ENCODE measurements at regions of chr1 and their contacts with region 1.

Region 1: DNA sequence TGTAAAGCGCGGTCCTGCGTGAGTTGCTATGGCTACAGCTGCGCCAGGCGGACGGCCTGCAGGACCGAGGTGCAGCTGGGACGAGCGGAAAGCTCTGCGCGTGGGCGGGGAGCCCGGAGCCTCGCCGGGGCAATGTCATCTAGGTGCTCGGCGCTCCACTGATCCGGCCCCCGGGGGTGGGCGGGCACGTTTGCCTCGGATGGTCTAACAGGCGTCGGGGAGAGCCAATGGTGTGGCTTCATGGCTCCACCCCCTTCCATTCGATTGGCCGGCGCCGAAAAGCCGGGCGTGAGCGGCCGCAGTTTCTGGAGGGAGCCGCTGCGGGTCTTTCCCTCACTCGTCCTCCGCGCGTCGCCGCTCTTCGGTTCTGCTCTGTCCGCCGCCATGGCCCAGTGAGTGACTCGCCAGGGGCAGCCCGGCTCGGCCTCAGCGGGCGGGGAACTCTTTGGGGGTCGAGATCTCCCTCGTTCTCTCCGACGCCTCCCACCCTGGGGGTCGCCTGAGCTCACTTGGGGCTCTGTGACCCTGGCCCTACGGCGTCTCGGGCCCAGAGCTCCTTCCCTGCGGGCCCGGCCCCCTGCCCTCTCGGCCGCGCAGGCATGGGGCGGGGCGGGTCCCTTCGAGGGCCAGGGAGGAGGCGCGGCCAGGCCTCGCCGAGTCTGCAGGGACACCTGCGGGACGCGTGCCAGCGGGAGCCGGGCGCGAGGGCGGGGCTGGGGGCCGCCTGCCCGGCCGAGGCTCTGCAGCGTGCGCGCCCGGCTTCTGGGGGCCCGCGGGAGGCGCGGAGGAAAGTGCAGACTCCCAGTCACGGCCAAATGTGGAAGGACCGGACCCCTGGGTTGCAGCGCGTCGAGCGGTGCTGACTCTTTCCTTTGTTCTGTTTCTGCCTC is at the start of gene PGD:
- DNase-seq: peak; percentile 95
- ATAC-seq: peak; percentile 94
- H3K4me3 ChIP-seq: peak within 1 kb of the TSS; percentile 66 to 80 (median 80)
- H3K27ac ChIP-seq: peak within 1 kb of the TSS; percentile 97
- H3K4me1 ChIP-seq: peaks cover 33% of the 10 kb centered on the region
- H3K27me3 ChIP-seq: no peaks in the 10 kb centered on the region
- CTCF ChIP-seq: peak; percentile 30; the same call in 1 of the 2 replicates
- EP300 ChIP-seq: peak in 1 of 2 experiments; percentile 46; a peak in 1 of 4 replicates
- POLR2A ChIP-seq: peak; percentile 90 to 97
- RAD21 ChIP-seq: no peak; the same call in 1 of the 2 replicates
- total RNA-seq, gene PGD: 210 and 242 TPM in 2 replicates

Region 2: GRCh38 chr1:9960706-9961562 is 438.0 kb before region 1 on chr1:
- CTCF ChIA-PET with region 1: no interaction called
- POLR2A ChIA-PET with region 1: no interaction called
- in situ Hi-C with region 1: no loop called
- intact Hi-C with region 1: no loop called
- DNase-seq: no peak
- ATAC-seq: no peak
- H3K4me3 ChIP-seq: no peak overlapping the region
- H3K27ac ChIP-seq: no peak overlapping the region
- H3K4me1 ChIP-seq: peaks cover 7% of the 10 kb centered on the region; the same call in 1 of the 2 replicates
- H3K27me3 ChIP-seq: no peaks in the 10 kb centered on the region
- CTCF ChIP-seq: no peak
- EP300 ChIP-seq: no peak
- POLR2A ChIP-seq: no peak
- RAD21 ChIP-seq: no peak

Region 3: DNA sequence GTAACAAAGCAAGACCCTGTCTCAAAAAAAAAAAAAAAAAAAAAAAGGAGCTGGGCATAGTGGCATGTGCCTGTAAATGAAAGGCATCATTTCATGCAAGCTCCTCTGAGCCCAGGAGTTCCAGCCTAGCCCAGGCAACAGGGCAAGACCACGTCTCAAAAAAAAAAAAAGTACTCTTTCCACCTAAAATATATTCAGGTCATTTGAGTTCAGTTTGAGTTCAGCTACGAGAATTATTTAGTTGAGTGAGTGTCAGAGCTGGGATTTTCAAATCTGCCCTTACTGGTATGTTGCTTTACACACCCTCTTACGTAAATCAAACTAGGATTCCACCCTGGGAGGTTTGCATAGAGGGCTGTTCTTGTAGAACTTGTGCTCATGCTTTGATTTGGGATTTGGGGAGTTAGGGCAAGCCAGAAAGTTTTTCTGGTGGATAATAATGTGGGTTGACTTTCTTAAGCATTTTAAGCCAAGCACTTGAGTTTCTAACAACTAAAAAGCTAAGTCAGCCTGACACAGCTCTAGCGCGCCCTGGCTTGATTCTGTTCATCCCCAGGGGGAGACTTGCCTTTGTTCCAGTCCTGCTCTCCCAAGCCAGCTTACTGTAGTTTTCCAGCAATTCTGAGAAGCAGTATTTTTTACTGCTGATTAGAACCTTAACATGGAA is 11.4 kb before region 1 on chr1:
- CTCF ChIA-PET with region 1: interaction called, 3 read pairs
- POLR2A ChIA-PET with region 1: interaction called, 65 read pairs
- in situ Hi-C with region 1: no loop called
- intact Hi-C with region 1: no loop called
- DNase-seq: no peak
- ATAC-seq: peak; percentile 46
- H3K4me3 ChIP-seq: no peak overlapping the region; a peak in 1 of 6 replicates
- H3K27ac ChIP-seq: peak overlapping the region; percentile 74
- H3K4me1 ChIP-seq: peaks cover 51% of the 10 kb centered on the region
- H3K27me3 ChIP-seq: no peaks in the 10 kb centered on the region
- CTCF ChIP-seq: no peak
- EP300 ChIP-seq: no peak
- POLR2A ChIP-seq: no peak
- RAD21 ChIP-seq: no peak

Region 4: DNA sequence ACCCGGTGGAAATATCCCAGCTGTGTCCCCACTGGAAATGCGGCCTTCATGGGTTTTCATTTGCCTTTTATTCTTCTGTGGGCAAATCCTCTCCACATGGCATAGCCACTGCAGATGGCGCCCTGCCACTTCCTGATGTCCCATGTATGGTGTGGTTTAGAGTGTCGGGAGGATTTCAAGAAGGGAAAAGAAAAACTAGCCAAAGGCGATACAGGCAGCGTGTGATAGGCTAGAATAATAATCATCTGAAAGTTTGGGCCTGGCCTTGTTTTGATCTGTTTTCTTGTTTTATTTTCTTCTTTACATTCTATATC is 199.4 kb after region 1 on chr1:
- CTCF ChIA-PET with region 1: no interaction called
- POLR2A ChIA-PET with region 1: no interaction called
- in situ Hi-C with region 1: no loop called
- intact Hi-C with region 1: no loop called
- DNase-seq: no peak
- ATAC-seq: no peak
- H3K4me3 ChIP-seq: 0 out of 6 replicates have a peak overlapping the region, but pooled peaks of 1 of the 3 experiments have one; percentile 0
- H3K27ac ChIP-seq: peak overlapping the region; percentile 69
- H3K4me1 ChIP-seq: peaks cover 46% of the 10 kb centered on the region
- H3K27me3 ChIP-seq: no peaks in the 10 kb centered on the region
- CTCF ChIP-seq: no peak
- EP300 ChIP-seq: no peak
- POLR2A ChIP-seq: no peak
- RAD21 ChIP-seq: no peak